Activated B cell treated with CpG ODN at 0.5 μM for 24 hours (primary cell): ENCODE measurements at regions of chr11 and their contacts with region 1.

Region 1: DNA sequence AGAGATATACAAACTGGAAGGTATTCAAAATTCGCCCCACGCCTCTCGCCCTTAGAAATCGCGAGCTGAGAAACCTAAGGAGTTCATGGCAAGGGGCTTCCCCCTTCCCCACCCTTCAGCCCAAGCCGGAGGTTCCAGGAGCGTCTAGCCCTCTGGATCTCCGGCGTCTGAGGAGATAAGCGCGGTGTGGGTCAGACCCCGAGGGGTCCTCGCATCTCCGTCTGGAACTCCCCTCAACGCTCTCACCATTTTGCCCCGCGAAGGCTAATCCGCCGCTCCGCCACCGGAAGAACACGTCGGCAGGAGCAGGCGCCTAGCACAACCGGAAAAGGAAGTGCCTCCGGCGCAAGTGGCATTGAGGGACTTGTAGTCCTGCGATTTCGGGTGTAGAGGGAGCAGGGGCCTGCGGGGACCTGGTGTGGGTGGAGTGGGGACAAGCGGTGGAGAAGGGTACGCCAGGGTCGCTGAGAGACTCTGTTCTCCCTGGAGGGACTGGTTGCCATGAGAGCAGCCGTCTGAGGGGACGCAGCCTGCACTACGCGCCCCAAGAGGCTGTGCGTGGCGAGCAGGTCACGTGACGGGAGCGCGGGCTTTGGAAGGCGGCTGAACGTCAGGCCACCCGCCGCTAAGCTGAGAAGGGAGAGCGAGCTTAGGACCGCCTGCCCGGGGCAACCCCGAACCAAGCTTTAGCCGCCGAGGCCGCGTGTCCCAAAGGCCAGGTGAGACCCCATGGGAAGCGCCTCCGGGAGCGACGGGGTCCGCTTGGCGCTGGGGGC is at the starts of genes FEN1 and TMEM258:
- DNase-seq: peak; percentile 89
- ATAC-seq: peak; percentile 92
- H3K4me3 Mint-ChIP-seq: peak within 1 kb of the TSS; percentile 98
- H3K27ac Mint-ChIP-seq: peak within 1 kb of the TSS; percentile 100
- H3K4me1 Mint-ChIP-seq: peaks cover 24% of the 10 kb centered on the region
- H3K27me3 Mint-ChIP-seq: no peaks in the 10 kb centered on the region
- CTCF ChIP-seq: no peak
- total RNA-seq, gene FEN1: 23.9 and 25.4 TPM in 2 replicates
- total RNA-seq, gene TMEM258: 87.4 and 94.0 TPM in 2 replicates

Region 2: DNA sequence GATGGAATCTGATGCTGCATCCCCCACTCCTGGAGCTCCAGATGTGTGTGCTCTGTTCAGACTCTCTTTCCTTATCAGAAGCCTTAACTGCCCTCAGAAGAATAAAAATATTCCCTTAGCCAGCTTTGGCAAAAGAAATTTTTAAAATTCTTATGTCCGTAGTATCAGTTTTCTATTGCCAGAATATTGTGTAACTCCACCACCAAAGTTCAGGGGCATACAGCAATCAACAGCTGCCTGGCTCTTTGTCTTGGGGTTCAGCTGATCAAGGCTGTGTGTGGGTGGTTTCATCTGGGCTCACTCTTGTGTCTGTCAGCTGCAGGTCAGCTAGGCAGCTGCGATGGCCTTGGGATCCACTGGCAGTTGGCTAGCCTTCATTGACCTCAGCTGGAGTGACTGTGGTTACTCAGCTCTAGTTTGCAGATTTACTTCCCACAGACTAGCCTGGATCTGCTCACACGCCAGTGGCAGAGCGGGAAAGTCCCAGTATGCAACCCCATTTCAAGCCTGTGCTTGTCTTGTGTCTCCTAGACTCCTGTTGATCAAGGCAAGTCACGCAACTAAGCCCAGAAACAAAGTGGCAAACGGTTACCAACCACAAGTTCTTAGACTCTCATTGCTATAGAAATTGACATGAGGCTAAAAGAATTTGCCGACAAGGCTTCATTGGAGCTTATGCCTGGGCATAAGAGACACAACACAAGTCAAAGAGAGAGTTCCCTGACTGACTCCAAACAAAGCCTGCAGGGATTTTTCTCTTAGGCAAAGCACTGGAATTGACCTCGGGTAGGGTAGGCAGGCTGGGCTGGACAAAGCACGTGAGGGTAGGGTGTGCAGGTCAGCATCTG is 422.9 kb before region 1 on chr11:
- CTCF ChIA-PET with region 1: no interaction called
- POLR2A ChIA-PET with region 1: no interaction called
- intact Hi-C with region 1: no loop called
- DNase-seq: no peak
- ATAC-seq: no peak
- H3K4me3 Mint-ChIP-seq: no peak overlapping the region
- H3K27ac Mint-ChIP-seq: no peak overlapping the region
- H3K4me1 Mint-ChIP-seq: peaks cover 3% of the 10 kb centered on the region
- H3K27me3 Mint-ChIP-seq: no peaks in the 10 kb centered on the region
- CTCF ChIP-seq: no peak

Region 3: DNA sequence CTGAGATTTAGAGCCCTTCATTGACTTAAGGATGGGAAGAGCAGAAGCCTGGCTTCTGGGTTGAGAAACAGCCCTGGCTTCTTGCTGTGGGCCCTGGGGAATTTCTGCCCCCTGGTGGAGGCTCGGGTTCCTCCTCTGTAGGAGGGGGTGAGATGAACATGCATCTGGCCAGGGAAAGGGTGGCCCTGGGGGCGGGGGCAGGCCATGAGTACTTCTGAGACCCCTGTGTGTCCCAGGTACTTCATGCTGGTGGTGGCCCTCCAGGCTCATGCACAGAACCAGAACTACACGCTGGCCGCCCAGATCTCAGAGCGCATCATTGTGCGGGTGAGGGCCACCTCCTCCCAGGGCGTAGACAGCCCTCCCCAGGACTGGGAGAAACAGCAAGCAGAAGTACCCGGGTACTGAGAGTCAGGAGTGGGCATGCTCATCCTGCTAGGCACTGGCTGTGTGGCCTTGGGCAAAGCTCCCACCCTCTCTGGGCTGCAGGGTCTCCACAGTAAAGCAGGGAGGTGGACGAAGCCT is 15.9 kb before region 1 on chr11:
- CTCF ChIA-PET with region 1: no interaction called
- POLR2A ChIA-PET with region 1: interaction called, 3 read pairs
- intact Hi-C with region 1: loop called (anchors 2 kb)
- DNase-seq: peak; percentile 50
- ATAC-seq: peak; percentile 59
- H3K4me3 Mint-ChIP-seq: peak overlapping the region; percentile 59
- H3K27ac Mint-ChIP-seq: no peak overlapping the region
- H3K4me1 Mint-ChIP-seq: peaks cover 14% of the 10 kb centered on the region
- H3K27me3 Mint-ChIP-seq: peaks cover 5% of the 10 kb centered on the region
- CTCF ChIP-seq: no peak

Region 4: DNA sequence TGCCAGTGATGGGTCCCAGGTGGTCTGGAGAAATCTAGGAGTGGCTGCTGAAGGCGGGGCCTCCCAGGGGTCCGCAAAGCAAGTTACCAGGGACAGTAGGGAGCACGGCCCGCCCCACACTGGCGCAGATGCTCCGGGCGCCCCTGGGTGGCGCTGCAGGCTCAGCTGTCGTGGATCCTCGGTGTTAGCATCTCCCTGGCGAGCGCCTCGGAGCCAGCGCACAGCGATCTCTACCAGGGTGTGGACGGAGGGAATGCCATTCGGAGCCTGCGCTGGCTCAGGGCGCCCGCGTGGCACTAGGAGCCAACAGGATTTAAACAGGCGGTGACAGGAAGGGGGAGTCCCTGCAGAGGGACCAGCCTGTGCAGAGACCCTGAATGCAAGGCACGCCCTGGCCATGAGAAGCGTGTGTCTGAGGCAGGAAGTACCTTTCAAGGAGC is 78.7 kb after region 1 on chr11:
- CTCF ChIA-PET with region 1: interaction called, 37 read pairs
- POLR2A ChIA-PET with region 1: interaction called, 4 read pairs
- intact Hi-C with region 1: loop called (anchors 1 kb)
- DNase-seq: peak; percentile 76
- ATAC-seq: peak; percentile 95
- H3K4me3 Mint-ChIP-seq: peak overlapping the region; percentile 75
- H3K27ac Mint-ChIP-seq: peak overlapping the region; percentile 46
- H3K4me1 Mint-ChIP-seq: peaks cover 10% of the 10 kb centered on the region
- H3K27me3 Mint-ChIP-seq: no peaks in the 10 kb centered on the region
- CTCF ChIP-seq: peak; percentile 89

Region 5: GRCh38 chr11:61967116-61967923 is 174.8 kb after region 1 on chr11 and contains the start of gene FTH1:
- CTCF ChIA-PET with region 1: no interaction called
- POLR2A ChIA-PET with region 1: interaction called, 12 read pairs
- intact Hi-C with region 1: loop called (anchors 5 kb)
- DNase-seq: peak; percentile 93
- ATAC-seq: peak; percentile 63
- H3K4me3 Mint-ChIP-seq: peak within 1 kb of the TSS; percentile 93
- H3K27ac Mint-ChIP-seq: peak within 1 kb of the TSS; percentile 97
- H3K4me1 Mint-ChIP-seq: peaks cover 72% of the 10 kb centered on the region
- H3K27me3 Mint-ChIP-seq: no peaks in the 10 kb centered on the region
- CTCF ChIP-seq: no peak
- total RNA-seq, gene FTH1: 865 and 906 TPM in 2 replicates

Region 6: DNA sequence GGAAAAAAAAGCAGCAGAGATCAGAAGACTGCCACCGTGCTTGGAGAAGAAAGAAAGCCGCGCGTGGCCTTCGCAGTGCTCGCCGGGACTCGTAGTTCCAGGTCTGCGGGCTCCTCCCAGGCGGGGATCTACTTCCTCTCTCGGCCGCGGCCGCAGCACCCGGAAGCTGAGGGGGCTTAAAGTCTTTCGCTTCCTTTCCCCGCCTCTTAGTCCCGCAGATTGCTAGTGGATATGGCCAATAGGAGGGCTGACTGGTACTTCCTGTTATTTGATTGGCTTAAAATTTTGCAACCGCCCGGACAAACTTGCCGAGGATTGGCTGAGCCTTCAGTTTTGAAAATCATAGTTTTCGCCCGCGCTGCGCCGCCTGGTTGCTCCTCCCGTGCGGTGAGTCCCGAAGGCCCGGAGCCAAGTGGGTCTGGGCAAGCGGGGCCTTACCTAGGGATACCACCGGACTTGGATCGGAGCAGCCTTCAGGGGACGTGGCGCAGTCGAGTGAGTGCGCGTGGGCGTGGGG is 331.2 kb after region 1 on chr11 and contains the start of gene INCENP:
- CTCF ChIA-PET with region 1: interaction called, 6 read pairs
- POLR2A ChIA-PET with region 1: no interaction called
- intact Hi-C with region 1: loop called (anchors 1 kb)
- DNase-seq: peak; percentile 80
- ATAC-seq: peak; percentile 99
- H3K4me3 Mint-ChIP-seq: peak within 1 kb of the TSS; percentile 93
- H3K27ac Mint-ChIP-seq: peak within 1 kb of the TSS; percentile 84
- H3K4me1 Mint-ChIP-seq: peaks cover 23% of the 10 kb centered on the region
- H3K27me3 Mint-ChIP-seq: no peaks in the 10 kb centered on the region
- CTCF ChIP-seq: no peak
- total RNA-seq, gene INCENP: 29.0 and 34.8 TPM in 2 replicates

Region 7: GRCh38 chr11:62315431-62315830 is 522.9 kb after region 1 on chr11:
- CTCF ChIA-PET with region 1: interaction called, 17 read pairs
- POLR2A ChIA-PET with region 1: no interaction called
- intact Hi-C with region 1: loop called (anchors 1 kb)
- DNase-seq: no peak
- ATAC-seq: no peak
- H3K4me3 Mint-ChIP-seq: no peak overlapping the region
- H3K27ac Mint-ChIP-seq: no peak overlapping the region
- H3K4me1 Mint-ChIP-seq: peaks cover 12% of the 10 kb centered on the region
- H3K27me3 Mint-ChIP-seq: peaks cover 39% of the 10 kb centered on the region
- CTCF ChIP-seq: no peak